Tibial artery (tissue), 4 donors: ENCODE measurements at regions of chr4 and their contacts with region 1.

Region 1: DNA sequence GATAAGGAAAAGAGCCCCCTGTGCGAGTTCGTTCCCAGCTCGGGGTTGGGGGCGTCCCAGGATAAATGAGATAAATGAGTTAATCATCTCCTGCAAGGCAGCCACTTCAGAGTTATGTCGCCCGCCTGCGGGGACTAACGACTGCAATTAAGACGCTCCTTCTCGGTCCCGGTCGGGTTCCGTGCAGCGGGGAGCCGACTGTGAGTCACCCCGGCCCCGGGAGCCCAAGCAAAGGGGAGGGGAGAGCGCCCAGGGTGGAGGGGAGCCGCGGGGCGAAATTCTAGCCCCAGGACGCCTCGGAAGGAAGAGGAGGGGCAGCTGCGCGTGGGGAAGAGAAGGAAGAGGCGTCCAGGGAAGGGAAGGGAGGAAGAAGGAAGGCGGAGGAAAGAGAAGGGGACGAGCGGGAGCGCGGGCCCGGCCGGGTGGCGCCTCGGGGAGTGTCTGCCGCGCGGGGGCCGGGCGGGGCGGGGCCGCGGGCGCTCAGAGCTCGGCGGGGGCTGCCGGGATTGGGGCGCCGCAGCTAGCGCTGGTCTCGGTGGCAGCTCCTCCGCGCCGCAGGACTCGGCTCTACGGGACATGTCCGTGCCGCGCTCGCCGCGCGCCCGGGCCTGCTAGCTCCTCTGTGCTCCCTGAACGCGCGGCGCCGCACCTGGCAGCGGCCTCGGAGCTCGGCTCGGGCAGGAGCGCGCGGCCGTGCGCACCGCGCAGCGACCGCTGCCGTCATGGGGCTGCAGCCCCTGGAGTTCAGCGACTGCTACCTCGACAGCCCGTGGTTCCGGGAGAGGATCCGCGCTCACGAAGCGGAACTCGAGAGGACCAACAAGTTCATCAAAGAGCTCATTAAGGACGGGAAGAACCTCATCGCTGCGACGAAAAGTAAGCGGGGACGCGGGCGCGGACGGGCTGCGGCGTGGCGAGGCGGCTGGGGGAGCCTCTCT is at the start of gene ARHGAP10:
- DNase-seq: peak; percentile 75 to 88
- H3K4me3 ChIP-seq: peak within 1 kb of the TSS; percentile 82 to 91
- H3K27ac ChIP-seq: peak within 1 kb of the TSS; percentile 89 to 96
- H3K4me1 ChIP-seq: peaks cover 0 to 33% (median 14%) of the 10 kb centered on the region in 4 donors
- H3K27me3 ChIP-seq: no peaks in the 10 kb centered on the region
- CTCF ChIP-seq: no peak

Region 2: DNA sequence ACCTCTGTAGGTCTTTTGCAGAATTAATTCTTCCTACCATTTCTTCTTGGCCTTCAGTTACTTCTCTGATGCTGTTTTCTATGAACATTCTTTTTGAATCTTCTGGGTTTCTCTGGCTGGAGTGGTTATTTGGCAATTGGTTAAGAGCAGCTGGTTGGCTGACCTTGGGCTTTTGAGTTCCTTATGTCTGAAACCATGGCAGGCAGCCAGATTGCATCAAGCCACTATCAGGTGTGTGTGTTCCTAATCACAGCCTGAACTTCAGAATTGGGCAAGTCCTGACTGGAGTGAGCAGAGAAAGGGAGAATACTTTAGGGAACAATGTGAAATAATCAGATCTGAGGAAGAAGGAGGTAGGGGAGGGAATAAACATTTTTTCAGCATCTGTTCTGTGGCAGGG is 90.3 kb after region 1 on chr4:
- intact Hi-C with region 1: loop called (anchors 10 kb)
- DNase-seq: peak; percentile 89 to 92
- H3K4me3 ChIP-seq: no peak overlapping the region
- H3K27ac ChIP-seq: peak overlapping the region; percentile 56 to 81
- H3K4me1 ChIP-seq: peaks cover 0 to 97% (median 44%) of the 10 kb centered on the region in 4 donors
- H3K27me3 ChIP-seq: no peaks in the 10 kb centered on the region
- CTCF ChIP-seq: no peak

Region 3: DNA sequence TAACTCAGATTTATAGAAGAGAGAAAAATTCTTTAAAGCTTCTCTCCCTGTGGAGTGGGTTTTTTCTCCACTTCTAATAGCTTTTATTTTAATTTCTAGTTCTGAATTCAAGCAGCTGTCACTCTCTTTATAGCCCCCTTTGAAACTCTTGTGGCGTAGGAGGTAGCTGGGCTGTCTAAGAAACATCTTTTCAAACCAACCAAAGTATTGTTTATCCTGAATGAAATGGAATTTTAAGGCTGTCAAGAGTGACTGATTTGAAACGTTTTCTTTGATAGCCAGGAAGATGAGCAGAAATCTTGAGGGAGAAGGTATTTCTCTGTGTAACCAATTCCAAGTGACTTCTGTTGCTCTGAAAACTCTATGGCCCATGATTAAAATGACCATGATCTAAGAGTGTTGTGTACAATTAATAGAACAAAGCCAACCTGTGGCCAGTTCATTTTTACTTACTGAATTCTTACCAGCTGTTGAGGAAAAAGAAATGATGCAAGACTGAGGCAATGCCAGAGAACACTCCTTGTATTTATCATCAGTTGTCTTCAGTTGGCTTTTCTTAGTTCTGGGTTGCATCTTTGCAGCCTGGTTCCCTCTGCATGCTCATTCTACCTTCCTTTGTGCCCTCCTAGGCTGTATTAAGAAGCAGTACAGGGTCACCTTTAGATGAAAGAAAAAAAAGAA is 298.5 kb after region 1 on chr4:
- intact Hi-C with region 1: no loop called
- DNase-seq: no peak
- H3K4me3 ChIP-seq: no peak overlapping the region
- H3K27ac ChIP-seq: no peak overlapping the region
- H3K4me1 ChIP-seq: peaks cover 0 to 37% (median 2%) of the 10 kb centered on the region in 4 donors
- H3K27me3 ChIP-seq: no peaks in the 10 kb centered on the region
- CTCF ChIP-seq: no peak